Panc1 (cell line): ENCODE measurements at regions of chr11 and their contacts with region 1.

Region 1: GRCh38 chr11:71525938-71526495 is 1.1 kb upstream of the KRTAP5-7 start:
- DNase-seq: no peak
- ATAC-seq: no peak
- H3K4me3 ChIP-seq: no peak overlapping the region
- H3K27ac ChIP-seq: no peak overlapping the region
- H3K4me1 ChIP-seq: no peaks in the 10 kb centered on the region
- H3K27me3 ChIP-seq: no peaks in the 10 kb centered on the region
- CTCF ChIP-seq: no peak

Region 2: DNA sequence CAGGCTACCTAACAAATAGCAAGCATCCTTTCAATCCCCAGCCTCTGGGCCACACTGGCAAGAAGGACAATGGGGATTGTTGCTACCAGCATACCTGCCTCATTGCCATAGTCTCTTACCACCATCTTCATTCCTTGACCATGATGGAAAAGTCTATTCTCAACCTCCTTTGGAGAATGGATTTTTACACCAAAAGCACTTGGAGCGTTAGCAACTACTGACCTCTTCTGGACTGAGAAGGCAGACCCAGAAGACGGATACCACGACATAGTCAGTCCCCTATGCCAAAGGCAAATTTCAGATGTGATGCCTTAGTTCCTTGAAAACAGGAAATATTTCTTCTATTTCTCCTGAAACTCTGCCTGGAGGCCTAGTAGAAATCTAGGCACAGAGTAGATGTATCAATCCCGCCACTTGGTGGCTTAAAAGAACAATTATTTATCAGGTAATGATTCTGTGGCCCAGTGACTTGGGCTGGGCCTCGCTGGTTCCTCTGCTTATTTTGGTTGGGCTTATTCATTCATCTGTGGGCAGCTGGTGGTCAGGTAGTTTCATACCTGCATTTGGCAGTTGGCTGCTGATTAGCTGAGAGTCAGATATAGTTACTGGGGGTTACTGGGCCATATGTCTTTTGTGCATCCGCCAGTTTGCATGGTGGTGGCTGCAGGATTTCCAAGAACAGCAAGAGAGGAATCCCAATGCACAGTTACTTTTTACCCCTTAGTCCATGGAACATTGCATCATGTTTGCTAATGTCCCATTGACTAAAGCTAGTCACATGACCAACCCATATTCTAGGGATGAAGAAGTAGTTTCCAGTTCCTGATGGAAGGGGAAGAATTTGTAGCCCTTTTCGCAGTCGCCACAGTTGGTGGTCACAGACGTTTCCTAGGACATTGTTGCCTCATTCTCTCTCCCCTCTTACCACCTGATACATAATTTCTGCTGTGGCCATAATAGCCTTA is 153.0 kb before region 1 on chr11:
- CTCF ChIA-PET with region 1: no interaction called
- POLR2A ChIA-PET with region 1: no interaction called
- in situ Hi-C with region 1: no loop called
- intact Hi-C with region 1: no loop called
- DNase-seq: peak; percentile 5
- ATAC-seq: peak; percentile 77
- H3K4me3 ChIP-seq: no peak overlapping the region
- H3K27ac ChIP-seq: no peak overlapping the region
- H3K4me1 ChIP-seq: no peaks in the 10 kb centered on the region
- H3K27me3 ChIP-seq: peaks cover 6% of the 10 kb centered on the region
- CTCF ChIP-seq: peak; percentile 82

Region 3: DNA sequence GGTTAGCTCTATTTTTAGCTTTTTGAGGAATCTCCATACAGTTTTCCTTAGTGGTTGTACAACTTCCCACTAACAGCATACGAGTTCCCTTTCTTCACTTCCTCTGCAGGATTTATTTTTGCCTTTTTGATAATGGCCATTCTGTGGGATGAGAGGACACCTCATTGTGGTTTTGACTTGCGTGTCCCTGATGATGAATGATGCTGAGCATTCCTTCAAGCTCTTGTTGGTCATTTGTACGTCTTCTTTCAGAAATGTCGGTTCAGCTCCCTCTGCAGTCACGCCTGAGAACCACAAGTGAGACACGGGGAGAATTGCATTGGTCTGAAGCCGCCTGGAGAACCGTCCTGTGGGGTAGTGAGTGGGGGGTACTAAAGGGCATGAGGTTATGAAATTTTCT is 37.4 kb after region 1 on chr11:
- CTCF ChIA-PET with region 1: interaction called, 3 read pairs
- POLR2A ChIA-PET with region 1: no interaction called
- in situ Hi-C with region 1: no loop called
- intact Hi-C with region 1: loop called (anchors 1 kb)
- DNase-seq: peak; percentile 36
- ATAC-seq: peak; percentile 86
- H3K4me3 ChIP-seq: no peak overlapping the region
- H3K27ac ChIP-seq: no peak overlapping the region
- H3K4me1 ChIP-seq: no peaks in the 10 kb centered on the region
- H3K27me3 ChIP-seq: peaks cover 12% of the 10 kb centered on the region; the same call in 1 of the 2 replicates
- CTCF ChIP-seq: peak; percentile 82